Endothelial cell of umbilical vein (primary cell): ENCODE measurements at regions of chr1 and their contacts with region 1.

Region 1: DNA sequence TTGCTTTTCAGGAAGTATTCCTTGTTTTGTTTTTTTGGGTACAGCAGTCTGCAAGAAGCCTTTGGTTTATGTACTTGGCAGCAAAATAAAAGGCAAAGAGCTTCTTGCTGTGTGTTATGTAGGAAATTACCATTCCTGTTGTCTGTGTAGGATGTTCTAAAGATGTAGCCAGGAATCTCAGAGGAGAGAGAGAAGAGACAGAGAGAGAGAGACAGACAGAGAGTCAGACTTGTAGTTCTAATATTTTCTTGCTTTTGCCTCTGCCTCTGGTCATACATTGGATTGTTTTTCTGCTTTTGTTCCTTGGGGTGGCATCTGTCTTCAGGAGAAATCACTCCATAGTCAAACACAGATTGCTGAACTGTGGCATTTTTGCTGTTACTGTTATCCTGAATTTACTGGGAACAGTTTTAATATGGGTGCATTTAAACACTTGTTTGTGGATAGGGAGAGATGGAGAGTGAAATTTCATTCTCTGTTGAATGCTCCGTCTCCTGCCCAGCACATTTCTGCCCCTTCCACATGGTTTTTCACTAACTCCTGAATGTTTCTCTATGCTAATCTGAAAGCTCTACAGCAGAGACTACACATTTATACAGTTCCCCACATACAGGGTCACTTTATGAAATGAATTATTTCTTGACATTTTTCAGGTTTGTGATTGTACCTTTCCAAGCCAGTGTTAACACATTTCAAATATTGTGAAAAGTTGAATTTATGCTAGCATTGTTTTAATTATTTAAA is 49.8 kb downstream of the POU2F1 start:
- DNase-seq: peak; percentile 47
- H3K4me3 ChIP-seq: no peak overlapping the region
- H3K27ac ChIP-seq: no peak overlapping the region
- H3K4me1 ChIP-seq: peaks cover 3% of the 10 kb centered on the region
- H3K27me3 ChIP-seq: no peaks in the 10 kb centered on the region
- CTCF ChIP-seq: no peak
- POLR2A ChIP-seq: no peak

Region 2: GRCh38 chr1:167185974-167186657 is 84.4 kb before region 1 on chr1:
- CTCF ChIA-PET with region 1: no interaction called
- POLR2A ChIA-PET with region 1: no interaction called
- dilution Hi-C with region 1: no loop called
- intact Hi-C with region 1: no loop called
- DNase-seq: no peak
- H3K4me3 ChIP-seq: no peak overlapping the region
- H3K27ac ChIP-seq: no peak overlapping the region
- H3K4me1 ChIP-seq: no peaks in the 10 kb centered on the region
- H3K27me3 ChIP-seq: peaks cover 6 to 8% of the 10 kb centered on the region in 2 experiments
- CTCF ChIP-seq: no peak
- POLR2A ChIP-seq: no peak

Region 3: DNA sequence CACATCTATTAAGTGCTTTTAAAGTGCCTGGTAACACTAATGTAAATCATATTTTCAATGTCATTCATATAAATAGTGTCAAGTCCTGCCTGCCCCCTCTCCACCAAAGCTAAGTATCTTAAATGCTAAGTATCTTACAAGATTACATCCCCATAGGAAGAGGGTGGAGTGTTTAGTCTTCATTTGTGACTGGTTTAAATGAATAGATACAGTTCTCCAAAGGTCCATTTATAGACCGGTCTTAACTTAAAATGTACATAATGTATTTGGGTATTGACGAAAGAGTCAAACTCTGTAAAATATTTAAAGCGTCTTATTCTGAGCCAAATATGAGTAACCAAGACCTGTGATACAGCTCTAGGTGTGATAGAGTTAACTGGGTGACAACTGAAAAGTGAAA is 10.4 kb after region 1 on chr1:
- CTCF ChIA-PET with region 1: interaction called, 22 read pairs
- POLR2A ChIA-PET with region 1: no interaction called
- dilution Hi-C with region 1: no loop called
- intact Hi-C with region 1: no loop called
- DNase-seq: no peak
- H3K4me3 ChIP-seq: no peak overlapping the region
- H3K27ac ChIP-seq: no peak overlapping the region
- H3K4me1 ChIP-seq: no peaks in the 10 kb centered on the region
- H3K27me3 ChIP-seq: no peaks in the 10 kb centered on the region
- CTCF ChIP-seq: no peak
- POLR2A ChIP-seq: no peak

Region 4: GRCh38 chr1:167342846-167343245 is 72.3 kb after region 1 on chr1:
- CTCF ChIA-PET with region 1: interaction called, 42 read pairs
- POLR2A ChIA-PET with region 1: no interaction called
- dilution Hi-C with region 1: no loop called
- intact Hi-C with region 1: loop called (anchors 2 kb)
- DNase-seq: no peak
- H3K4me3 ChIP-seq: no peak overlapping the region
- H3K27ac ChIP-seq: no peak overlapping the region
- H3K4me1 ChIP-seq: peaks cover 6% of the 10 kb centered on the region
- H3K27me3 ChIP-seq: no peaks in the 10 kb centered on the region
- CTCF ChIP-seq: no peak
- POLR2A ChIP-seq: no peak

Region 5: GRCh38 chr1:167371030-167371429 is 100.5 kb after region 1 on chr1:
- CTCF ChIA-PET with region 1: no interaction called
- POLR2A ChIA-PET with region 1: no interaction called
- dilution Hi-C with region 1: no loop called
- intact Hi-C with region 1: no loop called
- DNase-seq: no peak
- H3K4me3 ChIP-seq: no peak overlapping the region
- H3K27ac ChIP-seq: no peak overlapping the region
- H3K4me1 ChIP-seq: no peaks in the 10 kb centered on the region
- H3K27me3 ChIP-seq: no peaks in the 10 kb centered on the region
- CTCF ChIP-seq: no peak
- POLR2A ChIP-seq: no peak

Region 6: DNA sequence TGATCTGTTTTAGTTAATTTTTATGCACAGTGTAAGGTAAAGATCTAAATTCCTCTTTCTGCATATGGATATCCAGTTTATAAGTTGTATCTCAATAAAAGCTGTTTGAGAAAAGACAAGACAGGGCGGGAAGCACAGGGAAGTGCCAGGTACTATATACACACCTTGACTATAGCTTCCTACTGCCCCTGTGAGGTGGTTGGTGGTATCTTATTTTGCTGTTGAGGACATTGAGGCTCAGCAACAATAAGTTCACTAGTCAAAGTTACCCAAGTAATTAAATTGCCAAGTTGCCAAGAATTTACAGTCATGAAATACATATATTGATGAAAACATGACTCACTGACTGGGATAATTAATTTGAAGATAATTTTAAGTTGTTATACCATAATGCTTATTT is 138.7 kb after region 1 on chr1:
- CTCF ChIA-PET with region 1: interaction called, 27 read pairs
- POLR2A ChIA-PET with region 1: no interaction called
- dilution Hi-C with region 1: no loop called
- intact Hi-C with region 1: loop called (anchors 2 kb)
- DNase-seq: no peak
- H3K4me3 ChIP-seq: no peak overlapping the region
- H3K27ac ChIP-seq: no peak overlapping the region
- H3K4me1 ChIP-seq: peaks cover 4% of the 10 kb centered on the region
- H3K27me3 ChIP-seq: no peaks in the 10 kb centered on the region
- CTCF ChIP-seq: no peak
- POLR2A ChIP-seq: no peak

Region 7: DNA sequence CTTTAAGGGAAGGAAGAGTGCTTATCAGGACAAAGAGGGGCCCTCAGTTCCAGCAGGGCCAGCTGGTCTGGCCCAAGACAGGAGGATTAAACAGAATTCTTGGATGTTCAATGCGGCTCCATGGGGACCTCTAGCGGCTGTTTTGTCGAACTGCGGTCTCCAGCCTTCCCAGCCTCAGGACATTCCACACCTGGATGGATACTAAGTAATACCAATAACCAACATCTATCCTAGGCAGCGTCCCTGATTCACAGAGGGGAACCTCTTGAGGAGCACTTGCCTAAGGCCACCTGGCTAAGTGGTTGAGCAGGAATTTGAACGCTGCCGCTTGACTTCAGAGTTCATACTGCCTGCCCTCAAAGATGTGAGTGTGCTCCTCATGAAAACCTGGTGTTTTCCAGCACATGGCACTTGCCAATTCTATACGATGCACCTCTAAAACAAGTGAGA is 263.4 kb after region 1 on chr1:
- CTCF ChIA-PET with region 1: interaction called, 68 read pairs
- POLR2A ChIA-PET with region 1: no interaction called
- dilution Hi-C with region 1: no loop called
- intact Hi-C with region 1: loop called (anchors 1 kb)
- DNase-seq: peak; percentile 47
- H3K4me3 ChIP-seq: no peak overlapping the region
- H3K27ac ChIP-seq: no peak overlapping the region
- H3K4me1 ChIP-seq: no peaks in the 10 kb centered on the region
- H3K27me3 ChIP-seq: peaks cover 0 to 2% of the 10 kb centered on the region in 2 experiments
- CTCF ChIP-seq: peak; percentile 84 to 87
- POLR2A ChIP-seq: no peak